ENCODE measurements at regions of chr7 and their contacts with region 1.

Region 1: DNA sequence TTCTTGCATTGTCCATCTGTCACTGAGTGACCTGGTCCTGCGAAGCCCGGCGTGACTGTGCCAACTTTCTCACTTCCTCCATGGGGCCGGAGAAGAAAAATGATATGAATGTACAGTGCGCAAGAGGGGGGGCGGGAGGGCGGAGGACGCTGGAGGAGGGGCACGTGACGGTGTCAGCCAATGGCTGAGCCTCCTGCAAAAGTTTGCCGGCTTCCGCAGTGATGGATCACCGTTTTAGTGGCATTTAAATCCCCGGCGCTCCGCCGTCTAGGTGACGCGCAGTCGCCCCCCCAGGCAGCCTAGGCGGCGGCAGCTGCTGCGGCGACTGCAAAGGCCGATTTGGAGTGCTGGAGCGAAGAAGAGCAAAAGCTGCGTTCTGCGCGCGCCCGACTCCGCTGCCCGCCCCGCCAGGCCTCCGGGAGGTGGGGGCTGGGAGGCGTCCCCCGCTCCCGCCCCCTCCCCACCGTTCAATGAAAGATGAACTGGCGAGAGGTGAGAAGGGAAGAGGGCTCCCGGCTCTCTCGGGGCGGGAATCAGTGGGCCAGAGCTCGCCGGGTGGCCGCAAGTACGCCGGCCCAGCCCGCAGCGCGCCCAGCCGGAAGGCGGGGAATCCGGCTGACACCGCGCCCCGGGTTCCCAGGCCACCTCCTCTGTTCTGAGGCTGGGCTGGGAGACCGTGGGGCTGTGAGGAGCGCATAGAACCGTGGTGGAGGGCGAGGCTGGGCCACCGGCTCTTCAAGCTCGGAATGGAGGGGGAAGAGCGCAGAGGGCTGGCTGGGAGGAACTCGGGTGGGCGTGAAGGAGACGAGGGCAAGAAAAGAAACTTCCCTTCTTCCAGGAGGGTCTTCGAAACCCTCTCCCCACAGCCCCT is at the start of gene HOXA1:
- DNase-seq: peak; percentile 52
- H3K4me3 ChIP-seq: peak within 1 kb of the TSS; percentile 85 to 97 (median 92)
- H3K27ac ChIP-seq: peak within 1 kb of the TSS; percentile 96 to 99 (median 98)
- H3K4me1 ChIP-seq: peaks cover 0 to 64% (median 15%) of the 10 kb centered on the region in 3 donors
- H3K27me3 ChIP-seq: no peaks in the 10 kb centered on the region
- CTCF ChIP-seq: no peak
- POLR2A ChIP-seq: peak in 3 of 4 donors; percentile 51 to 88 (median 81)
- total RNA-seq, gene HOXA1: 1.6 to 2.5 (median 2.2) TPM

Region 2: GRCh38 chr7:26864309-26865093 is 231.6 kb before region 1 on chr7 and contains the start of gene SKAP2:
- intact Hi-C with region 1: loop called (anchors 5 kb)
- DNase-seq: peak; percentile 91
- H3K4me3 ChIP-seq: peak within 1 kb of the TSS; percentile 59 to 85 (median 77)
- H3K27ac ChIP-seq: peak within 1 kb of the TSS; percentile 96 to 99 (median 97)
- H3K4me1 ChIP-seq: peaks cover 0 to 52% (median 0%) of the 10 kb centered on the region in 3 donors
- H3K27me3 ChIP-seq: peaks cover 0 to 36% (median 2%) of the 10 kb centered on the region in 4 donors
- CTCF ChIP-seq: no peak
- POLR2A ChIP-seq: peak in 3 of 4 donors; percentile 73 to 95 (median 94)
- total RNA-seq, gene SKAP2: 19.3 to 25.2 (median 21.4) TPM

Measured in esophagus squamous epithelium (tissue), 5 donors.